GM18951 (cell line): ENCODE measurements at regions of chr3 and their contacts with region 1.

Region 1: GRCh38 chr3:186617038-186617946 is 4.4 kb downstream of the AHSG start:
- POLR2A ChIP-seq: no peak

Region 2: GRCh38 chr3:186806089-186807055 is 189.1 kb after region 1 on chr3 and contains the start of gene RFC4:
- in situ Hi-C with region 1: loop called (anchors 25 kb)
- POLR2A ChIP-seq: peak; percentile 89

Region 3: DNA sequence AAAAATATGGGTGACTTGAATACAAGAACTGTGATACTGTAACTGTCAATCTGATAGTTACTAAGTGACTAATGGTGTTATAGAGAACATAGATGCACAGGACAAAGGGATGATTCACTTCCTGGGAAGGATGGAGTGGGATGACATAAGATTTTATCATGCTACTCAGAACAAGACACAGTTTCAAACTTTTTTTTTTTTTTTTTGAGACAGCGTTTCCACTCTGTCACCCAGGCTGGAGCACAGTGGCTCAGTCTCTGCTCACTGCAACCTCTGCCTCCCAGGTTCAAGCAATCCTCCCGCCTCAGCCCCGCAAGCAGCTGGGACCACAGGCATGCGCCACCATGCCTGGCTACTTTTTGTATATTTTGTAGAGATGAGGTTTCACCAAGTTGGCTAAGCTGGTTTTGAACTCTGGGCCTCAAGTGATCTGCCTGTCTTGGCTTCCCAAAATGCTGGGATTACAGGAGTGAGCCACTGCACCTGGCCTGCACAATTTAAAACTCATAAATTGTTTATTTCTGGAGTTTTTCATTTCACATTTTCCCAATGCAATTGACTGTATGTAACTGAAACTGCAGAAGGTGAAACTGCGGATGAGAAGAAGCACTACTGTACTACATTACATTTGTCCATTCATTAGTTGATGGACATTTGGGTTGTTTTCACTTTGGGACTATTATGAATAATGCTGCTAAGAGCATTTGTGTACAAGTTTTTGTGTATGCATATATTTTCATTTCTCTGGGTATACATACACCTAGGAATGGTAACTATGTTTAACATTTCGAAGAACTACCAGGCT is 265.8 kb after region 1 on chr3:
- in situ Hi-C with region 1: no loop called
- POLR2A ChIP-seq: no peak

Region 4: GRCh38 chr3:187164885-187165543 is 547.7 kb after region 1 on chr3:
- in situ Hi-C with region 1: loop called (anchors 25 kb)
- POLR2A ChIP-seq: no peak